CD4-positive, alpha-beta memory T cell (primary cell): ENCODE measurements at regions of chr5 and their contacts with region 1.

Region 1: DNA sequence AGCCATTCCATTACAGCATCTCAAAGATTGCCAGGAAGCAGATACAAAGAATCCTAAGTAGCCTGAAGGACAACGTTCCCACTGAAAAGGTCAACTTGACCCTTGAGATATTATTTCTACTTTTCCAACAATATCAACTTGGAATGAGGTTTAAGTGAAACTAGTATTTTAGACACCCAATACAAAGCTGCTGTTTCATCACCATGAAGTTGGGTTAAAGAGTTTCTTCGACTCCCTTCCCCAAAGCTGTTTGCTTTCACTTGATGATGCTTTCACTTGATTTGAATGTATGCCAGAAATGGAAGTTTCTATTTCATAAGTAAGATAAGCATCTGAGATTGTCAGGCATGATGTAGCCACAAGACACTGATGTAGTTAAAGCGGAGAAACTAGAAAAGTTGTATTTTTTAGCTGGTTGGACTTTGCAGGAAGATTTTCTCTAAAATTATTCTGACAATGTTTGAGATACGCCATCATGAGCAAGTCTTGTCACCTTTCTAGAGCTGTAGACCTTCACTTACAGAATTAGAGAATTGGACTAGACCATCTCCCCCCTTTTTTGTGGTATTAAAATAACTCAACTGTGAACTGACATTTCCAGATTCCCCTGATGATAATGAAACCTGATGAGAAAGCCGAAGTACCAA is 20.1 kb downstream of the MOCS2 start:
- DNase-seq: peak in 4 of 5 donors; percentile 30 to 63 (median 40)
- H3K4me3 ChIP-seq: no peak overlapping the region
- H3K4me3 Mint-ChIP-seq: peak overlapping the region; percentile 10 to 68 (median 62)
- H3K27ac ChIP-seq: no peak overlapping the region
- H3K27ac Mint-ChIP-seq: peak overlapping the region; percentile 1 to 79 (median 45)
- H3K4me1 ChIP-seq: peaks cover 27% of the 10 kb centered on the region
- H3K4me1 Mint-ChIP-seq: peaks cover 10 to 26% (median 17%) of the 10 kb centered on the region in 4 donors
- H3K27me3 ChIP-seq: no peaks in the 10 kb centered on the region
- H3K27me3 Mint-ChIP-seq: no peaks in the 10 kb centered on the region

Region 2: DNA sequence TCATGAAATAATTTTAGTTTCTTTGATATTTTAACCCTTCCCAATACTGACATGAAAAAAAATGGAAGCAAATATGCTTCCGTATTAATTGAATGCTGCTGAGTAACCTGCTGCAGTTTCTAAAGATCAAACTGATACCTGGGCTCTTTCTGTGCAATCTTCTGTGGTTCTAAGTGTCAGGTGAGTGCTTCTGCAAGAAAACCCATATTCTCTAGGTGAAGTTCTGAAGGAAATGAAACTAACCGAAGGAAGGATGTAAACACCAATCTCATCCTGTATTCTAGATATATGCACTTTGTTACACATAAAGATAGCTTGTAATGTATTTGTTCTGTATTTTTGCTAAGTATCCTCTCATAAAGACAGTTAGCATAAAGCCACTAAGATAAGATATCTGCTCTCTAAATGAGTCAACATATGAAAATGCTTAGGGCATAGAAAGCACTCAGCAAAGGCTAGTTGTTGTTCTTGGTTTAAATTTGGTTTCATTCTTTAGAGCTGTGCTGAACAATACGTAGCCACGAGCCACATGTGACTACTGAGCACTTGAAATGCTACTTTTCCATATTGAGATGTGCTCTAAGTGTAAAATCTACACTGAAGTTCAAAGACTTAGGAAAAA is 48.3 kb before region 1 on chr5:
- CTCF ChIA-PET with region 1: no interaction called
- POLR2A ChIA-PET with region 1: no interaction called
- intact Hi-C with region 1: loop called (anchors 5 kb)
- DNase-seq: peak in 4 of 5 donors; percentile 18 to 49 (median 38)
- H3K4me3 ChIP-seq: peak overlapping the region in 1 of 2 donors; percentile 17
- H3K4me3 Mint-ChIP-seq: peak overlapping the region; percentile 69 to 86 (median 78)
- H3K27ac ChIP-seq: peak overlapping the region; percentile 33
- H3K27ac Mint-ChIP-seq: peak overlapping the region; percentile 38 to 76 (median 53)
- H3K4me1 ChIP-seq: peaks cover 24% of the 10 kb centered on the region
- H3K4me1 Mint-ChIP-seq: peaks cover 14 to 30% (median 23%) of the 10 kb centered on the region in 4 donors
- H3K27me3 ChIP-seq: no peaks in the 10 kb centered on the region
- H3K27me3 Mint-ChIP-seq: no peaks in the 10 kb centered on the region